ENCODE measurements at regions of chr9 and their contacts with region 1.

Region 1: GRCh38 chr9:36400332-36401163 is 479 bp upstream of the RNF38 start:
- DNase-seq: peak; percentile 93
- H3K4me3 ChIP-seq: peak overlapping the region; percentile 59 to 91 (median 78)
- H3K27ac ChIP-seq: peak overlapping the region; percentile 99 to 100 (median 99)
- H3K4me1 ChIP-seq: peaks cover 4 to 39% (median 20%) of the 10 kb centered on the region in 4 donors
- H3K27me3 ChIP-seq: no peaks in the 10 kb centered on the region
- CTCF ChIP-seq: peak in 2 of 5 experiments; percentile 15 to 26
- EP300 ChIP-seq: no peak
- POLR2A ChIP-seq: peak; percentile 83

Region 2: DNA sequence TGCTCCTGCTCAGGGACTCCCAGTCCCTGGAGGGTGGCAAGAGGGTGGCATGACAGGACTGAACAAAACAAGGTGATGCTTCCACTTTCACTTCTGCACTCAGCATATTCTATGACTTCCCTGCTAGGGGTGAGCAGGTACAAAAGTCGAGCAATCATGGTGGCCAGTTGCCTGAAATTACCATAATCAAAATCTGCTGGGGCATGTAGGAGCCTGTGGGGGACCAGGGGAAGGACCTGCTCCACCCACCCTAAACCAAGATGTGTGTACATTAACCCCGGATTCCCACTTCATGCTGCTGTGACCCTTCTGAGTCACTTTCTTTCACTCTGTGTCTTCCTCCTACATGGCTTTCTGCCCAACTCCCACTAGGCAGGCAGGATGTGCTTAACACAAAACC is 1515.8 kb before region 1 on chr9:
- in situ Hi-C with region 1: no loop called
- intact Hi-C with region 1: no loop called
- DNase-seq: no peak
- H3K4me3 ChIP-seq: no peak overlapping the region
- H3K27ac ChIP-seq: no peak overlapping the region
- H3K4me1 ChIP-seq: no peaks in the 10 kb centered on the region
- H3K27me3 ChIP-seq: no peaks in the 10 kb centered on the region
- CTCF ChIP-seq: no peak
- EP300 ChIP-seq: no peak
- POLR2A ChIP-seq: no peak

Region 3: DNA sequence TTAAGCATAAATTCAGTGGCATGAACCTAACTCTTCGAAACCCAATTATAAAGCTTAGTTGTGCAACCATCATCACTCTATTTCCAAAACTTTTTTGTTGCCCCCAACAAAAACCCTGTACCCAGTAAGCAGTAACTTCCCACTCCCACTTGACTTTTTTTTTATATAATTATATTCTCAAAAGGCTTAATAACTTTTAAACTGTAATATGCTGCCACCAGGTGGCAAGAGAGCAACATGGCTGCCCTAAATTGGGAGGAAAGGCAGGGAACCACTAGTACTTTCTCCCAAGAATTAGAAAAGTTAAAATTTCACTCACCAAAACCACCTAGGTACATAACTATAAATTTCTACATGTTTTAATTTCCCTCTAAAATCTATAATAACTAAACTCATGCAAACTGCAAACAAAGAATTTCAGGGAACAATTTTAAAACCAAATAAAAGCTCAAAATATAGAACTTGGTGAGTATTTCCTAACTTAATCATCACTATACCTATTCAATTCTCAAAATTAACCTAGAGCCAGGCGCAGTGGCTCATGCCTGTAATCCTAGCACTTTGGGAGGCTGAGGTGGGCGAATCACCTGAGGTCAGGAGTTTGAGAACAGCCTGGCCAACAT is 49.7 kb after region 1 on chr9:
- in situ Hi-C with region 1: loop called in 2 of 4 experiments (anchors 10 kb)
- intact Hi-C with region 1: no loop called
- DNase-seq: no peak
- H3K4me3 ChIP-seq: no peak overlapping the region
- H3K27ac ChIP-seq: no peak overlapping the region
- H3K4me1 ChIP-seq: peaks cover 0 to 6% (median 1%) of the 10 kb centered on the region in 4 donors
- H3K27me3 ChIP-seq: no peaks in the 10 kb centered on the region
- CTCF ChIP-seq: peak; percentile 60 to 72 (median 65)
- EP300 ChIP-seq: no peak
- POLR2A ChIP-seq: no peak

Region 4: DNA sequence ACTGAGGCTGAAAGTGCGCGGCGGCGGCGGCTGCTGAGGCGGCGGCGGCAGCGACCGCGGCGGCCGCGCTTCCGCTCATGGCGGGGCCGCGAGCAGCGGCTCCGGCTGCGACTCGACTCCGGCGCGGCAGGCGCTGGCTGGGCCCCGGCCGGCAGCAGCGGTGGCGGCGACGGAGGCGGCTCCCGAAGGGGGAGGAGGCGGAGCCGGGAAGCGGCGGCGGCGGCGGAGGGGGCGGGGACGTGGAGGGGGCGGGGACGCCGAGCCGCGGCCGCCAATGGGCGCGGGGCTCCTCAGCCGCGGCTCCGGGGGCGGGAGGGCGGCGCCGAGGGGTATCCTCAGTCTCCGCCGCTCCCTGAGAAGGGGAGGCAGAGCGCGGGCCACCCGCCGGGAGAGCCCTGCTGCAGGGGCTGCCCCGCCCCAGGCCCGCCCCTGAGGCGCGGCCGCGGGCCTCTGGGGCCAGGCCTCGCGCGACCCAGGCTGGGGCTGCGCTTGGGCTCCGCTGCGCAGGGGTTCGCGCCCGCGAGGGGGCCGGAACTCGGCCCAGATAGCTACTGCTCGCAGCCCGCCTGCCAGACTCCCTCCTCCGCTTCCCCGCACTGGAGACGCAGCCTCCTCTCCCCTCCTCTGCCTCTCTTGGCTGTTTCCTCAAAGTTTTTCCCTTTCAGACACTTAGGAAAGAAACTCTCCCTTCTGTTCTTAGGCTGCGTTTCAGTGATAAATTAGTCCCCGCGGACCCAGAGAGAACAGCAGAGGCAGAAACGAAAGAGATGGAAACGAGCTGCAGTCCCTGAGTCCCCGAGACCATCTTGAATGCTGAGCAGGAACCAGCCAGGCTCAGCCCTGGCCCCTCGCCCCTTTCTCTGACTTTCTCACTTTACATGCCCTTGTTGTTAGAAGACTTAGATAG is 87.2 kb after region 1 on chr9:
- in situ Hi-C with region 1: loop called in 1 of 4 experiments (anchors 10 kb)
- intact Hi-C with region 1: loop called (anchors 10 kb)
- DNase-seq: peak; percentile 94
- H3K4me3 ChIP-seq: peak overlapping the region; percentile 47 to 100 (median 87)
- H3K27ac ChIP-seq: peak overlapping the region; percentile 90 to 96 (median 94)
- H3K4me1 ChIP-seq: peaks cover 10 to 40% (median 23%) of the 10 kb centered on the region in 4 donors
- H3K27me3 ChIP-seq: no peaks in the 10 kb centered on the region
- CTCF ChIP-seq: peak in 4 of 5 experiments; percentile 5 to 59 (median 30)
- EP300 ChIP-seq: no peak
- POLR2A ChIP-seq: peak; percentile 86

Region 5: DNA sequence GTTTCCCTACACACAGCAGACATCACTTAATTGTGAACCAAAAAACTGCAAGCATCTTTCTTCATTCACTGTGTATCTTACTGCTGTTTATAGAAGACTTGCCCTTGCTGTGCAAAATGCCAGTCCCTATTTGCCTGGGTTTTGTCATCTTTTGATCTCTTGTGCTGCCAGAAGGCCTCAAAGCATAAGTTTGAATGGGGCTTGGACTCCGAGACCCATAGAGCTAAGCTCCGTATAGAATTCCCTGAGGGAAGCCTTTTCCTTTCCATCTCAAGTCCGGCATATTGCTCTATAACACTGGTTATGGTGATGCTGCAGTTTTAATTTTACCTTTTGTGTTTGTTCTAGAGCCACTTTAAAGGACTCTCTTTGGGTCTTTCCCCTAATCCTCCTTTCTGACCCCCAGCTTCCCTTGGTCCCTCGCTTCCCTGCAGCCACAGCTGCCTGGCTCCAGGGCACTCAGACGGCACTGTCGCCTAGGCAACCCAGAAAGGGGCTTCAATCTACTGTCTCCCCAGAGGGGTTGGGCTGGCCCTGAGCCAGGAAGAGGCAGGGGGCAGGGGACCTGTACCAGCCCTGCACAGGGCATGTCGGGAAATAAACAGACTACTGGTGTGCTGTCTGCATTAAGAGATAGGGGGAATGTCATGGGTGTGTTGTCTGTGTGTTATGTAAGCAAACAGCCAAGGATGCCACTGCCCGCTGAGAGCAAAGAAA is 98.8 kb after region 1 on chr9:
- in situ Hi-C with region 1: loop called in 1 of 4 experiments (anchors 10 kb)
- intact Hi-C with region 1: no loop called
- DNase-seq: no peak
- H3K4me3 ChIP-seq: no peak overlapping the region
- H3K27ac ChIP-seq: no peak overlapping the region
- H3K4me1 ChIP-seq: no peaks in the 10 kb centered on the region
- H3K27me3 ChIP-seq: no peaks in the 10 kb centered on the region
- CTCF ChIP-seq: no peak
- EP300 ChIP-seq: no peak
- POLR2A ChIP-seq: no peak

Region 6: GRCh38 chr9:36551129-36551528 is 150.6 kb after region 1 on chr9:
- in situ Hi-C with region 1: loop called (anchors 5 to 10 kb)
- intact Hi-C with region 1: no loop called
- DNase-seq: no peak
- H3K4me3 ChIP-seq: no peak overlapping the region
- H3K27ac ChIP-seq: no peak overlapping the region
- H3K4me1 ChIP-seq: no peaks in the 10 kb centered on the region
- H3K27me3 ChIP-seq: no peaks in the 10 kb centered on the region
- CTCF ChIP-seq: no peak
- EP300 ChIP-seq: no peak
- POLR2A ChIP-seq: no peak

Region 7: GRCh38 chr9:36728651-36729520 is 328.3 kb after region 1 on chr9:
- in situ Hi-C with region 1: loop called in 1 of 4 experiments (anchors 25 kb)
- intact Hi-C with region 1: no loop called
- DNase-seq: peak; percentile 84
- H3K4me3 ChIP-seq: no peak overlapping the region
- H3K27ac ChIP-seq: no peak overlapping the region
- H3K4me1 ChIP-seq: no peaks in the 10 kb centered on the region
- H3K27me3 ChIP-seq: no peaks in the 10 kb centered on the region
- CTCF ChIP-seq: peak; percentile 57 to 79 (median 70)
- EP300 ChIP-seq: no peak
- POLR2A ChIP-seq: no peak